ENCODE measurements at regions of chr1 and their contacts with region 1.

Region 1: DNA sequence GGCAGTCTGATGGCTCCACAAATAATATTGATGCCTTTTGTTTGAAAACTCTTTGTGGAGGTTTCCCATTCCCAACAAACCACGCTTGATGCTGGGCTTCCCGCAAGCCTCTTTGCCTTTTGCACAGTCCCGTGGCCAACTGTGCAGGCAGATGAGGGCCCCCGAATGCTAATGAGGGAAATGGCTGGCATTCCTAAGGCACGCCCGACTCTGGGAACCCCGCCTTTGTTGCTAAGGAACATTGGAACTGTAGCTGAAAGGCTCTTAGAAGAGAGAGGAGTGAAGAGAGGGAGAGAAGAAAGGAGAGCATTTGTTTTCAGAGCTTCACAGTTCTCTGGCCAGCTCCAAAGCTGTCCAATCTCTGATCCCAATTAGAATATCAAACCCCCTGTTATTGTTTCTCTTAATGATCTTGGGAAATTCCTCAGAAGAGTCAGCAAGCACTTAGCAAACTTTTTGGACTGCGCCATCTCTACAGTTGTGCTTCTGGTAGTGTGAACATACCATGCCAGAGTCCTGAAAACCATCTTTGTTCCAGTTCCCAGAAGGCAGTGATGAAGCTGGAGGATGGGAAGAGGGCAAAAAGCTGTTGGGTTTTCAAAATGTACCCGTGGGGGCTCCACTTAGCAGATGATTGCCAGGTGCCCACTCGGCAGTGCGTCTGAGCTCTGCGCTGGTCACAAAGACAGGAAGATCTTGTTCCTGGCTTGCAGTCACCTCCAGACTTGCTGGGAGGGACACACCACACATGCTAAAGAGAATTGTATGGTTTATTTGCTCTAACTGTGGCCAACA is 60.1 kb upstream of the CYP2J2 start:
- DNase-seq: no peak
- ATAC-seq: no peak
- H3K4me3 ChIP-seq: no peak overlapping the region
- H3K27ac ChIP-seq: no peak overlapping the region
- H3K4me1 ChIP-seq: no peaks in the 10 kb centered on the region
- H3K27me3 ChIP-seq: no peaks in the 10 kb centered on the region; a peak in 1 of 5 replicates
- CTCF ChIP-seq: no peak
- EP300 ChIP-seq: no peak
- POLR2A ChIP-seq: no peak
- RAD21 ChIP-seq: no peak

Region 2: DNA sequence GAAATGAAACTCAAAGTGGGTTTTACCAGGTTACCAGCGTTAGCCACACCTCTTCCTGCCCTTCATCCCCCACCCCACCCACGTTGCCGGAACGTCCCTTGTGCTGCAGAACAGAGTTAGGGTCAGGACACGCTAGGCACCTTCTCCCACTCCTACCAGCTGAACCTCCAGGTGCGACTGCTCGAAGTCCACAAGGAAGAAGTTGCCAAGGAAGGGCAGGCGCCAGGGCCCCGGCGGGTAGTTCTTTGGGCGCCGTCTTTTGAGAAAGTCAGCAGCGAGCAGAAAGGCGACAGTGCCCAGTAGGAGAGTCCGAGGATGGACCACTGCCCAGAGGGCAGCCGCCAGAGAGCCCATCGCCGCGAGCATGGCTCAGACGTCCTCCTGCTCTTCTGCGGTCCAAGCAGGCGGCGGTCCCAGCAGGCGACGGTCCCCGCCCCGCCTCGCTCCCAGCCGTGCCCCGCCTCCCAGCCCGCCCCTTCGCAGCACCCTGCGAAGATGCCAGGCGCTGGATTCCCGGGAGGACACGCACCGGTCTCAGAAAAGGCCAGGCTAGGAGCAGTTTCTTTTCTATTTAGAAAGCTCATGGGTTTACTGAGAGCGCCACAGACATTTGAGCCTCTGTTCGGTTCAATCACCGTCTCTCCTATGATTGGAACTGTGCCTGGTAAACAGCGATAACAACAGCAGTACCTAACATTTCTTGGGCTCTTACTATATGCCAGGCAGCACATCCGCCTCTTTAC is 60.2 kb before region 1 on chr1 and contains the start of gene CYP2J2:
- CTCF ChIA-PET with region 1: no interaction called
- POLR2A ChIA-PET with region 1: no interaction called
- in situ Hi-C with region 1: loop called (anchors 10 kb)
- intact Hi-C with region 1: no loop called
- DNase-seq: no peak
- ATAC-seq: peak; percentile 100
- H3K4me3 ChIP-seq: peak within 1 kb of the TSS; percentile 74 to 90 (median 76)
- H3K27ac ChIP-seq: peak within 1 kb of the TSS; percentile 62
- H3K4me1 ChIP-seq: peaks cover 37% of the 10 kb centered on the region
- H3K27me3 ChIP-seq: no peaks in the 10 kb centered on the region; a peak in 2 of 5 replicates
- CTCF ChIP-seq: no peak
- EP300 ChIP-seq: no peak
- POLR2A ChIP-seq: peak in 1 of 2 experiments; percentile 73; a peak in 2 of 4 replicates
- RAD21 ChIP-seq: no peak
- total RNA-seq, gene CYP2J2: 1.1 and 2.1 TPM in 2 replicates